ENCODE measurements at regions of chr12 and their contacts with region 1.

Region 1: DNA sequence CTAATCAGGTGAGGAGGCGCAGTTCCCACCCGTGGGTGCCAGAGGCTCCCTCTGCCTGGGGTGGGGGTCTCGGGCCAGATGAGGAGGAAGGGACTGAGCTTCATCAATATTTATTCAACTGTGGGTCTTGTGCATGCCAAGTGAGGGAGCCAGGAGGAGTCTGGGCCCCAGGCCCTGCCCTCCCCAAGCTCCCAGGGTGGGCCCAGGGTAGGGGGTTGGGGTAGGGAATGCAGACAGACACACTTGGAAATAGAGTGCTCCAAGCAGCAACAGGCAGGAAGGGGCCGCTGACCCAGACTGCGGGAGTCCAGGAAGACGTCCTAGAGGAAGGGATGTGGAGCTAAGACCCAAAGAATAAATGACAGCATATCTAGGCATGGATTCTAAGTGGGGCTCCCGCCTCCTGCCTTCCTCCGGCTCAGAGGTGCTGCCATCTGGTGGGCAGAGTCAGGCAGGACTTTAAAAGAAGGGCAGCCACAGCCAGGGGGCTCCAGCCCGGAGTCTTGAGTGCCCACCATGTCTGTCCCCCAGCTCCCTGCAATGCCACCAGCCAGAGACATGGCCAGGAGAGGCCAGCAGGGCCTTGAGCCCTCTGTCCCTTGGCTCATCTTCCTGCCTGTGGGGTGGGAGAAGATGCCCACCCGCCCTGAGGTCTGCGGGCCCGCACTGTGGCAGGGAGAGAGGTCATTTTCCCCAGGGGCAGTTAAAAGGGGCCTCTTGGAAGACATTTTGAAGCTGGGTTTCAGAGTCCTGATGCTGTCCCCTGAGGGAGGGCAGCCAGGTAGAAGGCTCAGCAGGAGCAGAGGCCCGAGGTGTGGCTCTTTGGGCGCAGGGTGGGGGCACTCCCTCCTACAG is 70.1 kb downstream of the PHETA1 start:
- DNase-seq: no peak
- ATAC-seq: peak; percentile 92
- H3K4me3 ChIP-seq: no peak overlapping the region
- H3K27ac ChIP-seq: no peak overlapping the region
- H3K4me1 ChIP-seq: peaks cover 1% of the 10 kb centered on the region; the same call in 1 of the 2 replicates
- H3K27me3 ChIP-seq: no peaks in the 10 kb centered on the region
- CTCF ChIP-seq: peak; percentile 76 to 81 (median 80)
- EP300 ChIP-seq: no peak
- POLR2A ChIP-seq: no peak
- RAD21 ChIP-seq: peak; percentile 60

Region 2: DNA sequence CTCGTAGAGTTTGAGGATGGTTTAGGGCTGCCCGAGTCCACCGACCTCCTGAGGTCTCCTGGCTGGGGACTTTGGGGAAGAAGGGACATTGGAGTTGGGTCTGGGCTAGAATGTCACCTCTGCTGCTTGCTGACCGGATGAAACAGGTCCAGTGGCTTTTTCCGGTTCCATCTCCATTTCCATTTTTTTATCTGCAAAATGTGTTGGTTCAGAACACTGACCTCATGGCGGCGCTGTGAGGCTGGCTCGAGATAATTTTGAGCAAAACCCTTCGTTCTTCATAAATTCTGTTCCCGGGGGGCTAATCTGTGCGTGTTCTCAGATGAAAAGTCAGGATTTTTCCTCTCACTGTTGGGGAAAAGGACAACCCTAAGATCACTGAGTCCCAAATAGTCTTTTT is 366.8 kb before region 1 on chr12:
- CTCF ChIA-PET with region 1: interaction called, 10 read pairs
- POLR2A ChIA-PET with region 1: no interaction called
- RAD21 ChIA-PET with region 1: no interaction called
- SMC1A ChIA-PET with region 1: no interaction called
- in situ Hi-C with region 1: no loop called
- intact Hi-C with region 1: loop called (anchors 1 kb)
- DNase-seq: no peak
- ATAC-seq: no peak
- H3K4me3 ChIP-seq: no peak overlapping the region
- H3K27ac ChIP-seq: no peak overlapping the region
- H3K4me1 ChIP-seq: no peaks in the 10 kb centered on the region
- H3K27me3 ChIP-seq: no peaks in the 10 kb centered on the region
- CTCF ChIP-seq: peak; percentile 18 to 38 (median 28); a peak in 3 of 6 replicates
- EP300 ChIP-seq: no peak
- POLR2A ChIP-seq: no peak
- RAD21 ChIP-seq: 0 out of 2 replicates have a peak, but pooled peaks have one; percentile 9

Region 3: GRCh38 chr12:110937104-110937641 is 361.6 kb before region 1 on chr12:
- CTCF ChIA-PET with region 1: interaction called, 10 read pairs
- POLR2A ChIA-PET with region 1: no interaction called
- RAD21 ChIA-PET with region 1: no interaction called
- SMC1A ChIA-PET with region 1: no interaction called
- in situ Hi-C with region 1: no loop called
- intact Hi-C with region 1: loop called (anchors 1 kb)
- DNase-seq: no peak
- ATAC-seq: peak; percentile 77
- H3K4me3 ChIP-seq: no peak overlapping the region
- H3K27ac ChIP-seq: no peak overlapping the region
- H3K4me1 ChIP-seq: peaks cover 3% of the 10 kb centered on the region; the same call in 1 of the 2 replicates
- H3K27me3 ChIP-seq: no peaks in the 10 kb centered on the region
- CTCF ChIP-seq: peak; percentile 92 to 95 (median 94)
- EP300 ChIP-seq: no peak
- POLR2A ChIP-seq: no peak
- RAD21 ChIP-seq: peak; percentile 89

Region 4: DNA sequence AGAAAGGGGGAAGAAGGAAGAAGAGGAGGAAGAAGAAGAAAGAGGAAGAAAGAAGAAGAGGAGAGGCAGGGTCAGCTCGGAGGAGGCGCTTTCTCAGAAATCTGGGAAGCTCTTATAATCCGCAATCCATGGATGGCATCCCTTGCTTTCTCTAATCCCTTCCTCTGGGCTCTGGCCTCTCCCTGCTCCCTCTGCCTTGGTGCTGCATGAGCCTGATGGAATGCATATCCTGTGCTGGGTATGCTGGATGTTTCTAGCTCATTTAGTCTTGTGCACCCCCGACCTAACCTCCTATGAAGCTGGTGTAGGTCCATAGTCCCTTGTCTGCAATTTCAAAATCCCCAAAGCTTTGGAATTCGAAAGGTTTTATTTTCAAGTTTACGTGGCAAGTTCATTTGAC is 284.3 kb before region 1 on chr12:
- CTCF ChIA-PET with region 1: no interaction called
- POLR2A ChIA-PET with region 1: no interaction called
- RAD21 ChIA-PET with region 1: no interaction called
- SMC1A ChIA-PET with region 1: no interaction called
- in situ Hi-C with region 1: no loop called
- intact Hi-C with region 1: no loop called
- DNase-seq: no peak
- ATAC-seq: no peak
- H3K4me3 ChIP-seq: no peak overlapping the region
- H3K27ac ChIP-seq: no peak overlapping the region
- H3K4me1 ChIP-seq: no peaks in the 10 kb centered on the region
- H3K27me3 ChIP-seq: peaks cover 0 to 2% of the 10 kb centered on the region in 2 experiments; a peak in 1 of 4 replicates
- CTCF ChIP-seq: no peak
- EP300 ChIP-seq: no peak
- POLR2A ChIP-seq: no peak
- RAD21 ChIP-seq: no peak

Region 5: DNA sequence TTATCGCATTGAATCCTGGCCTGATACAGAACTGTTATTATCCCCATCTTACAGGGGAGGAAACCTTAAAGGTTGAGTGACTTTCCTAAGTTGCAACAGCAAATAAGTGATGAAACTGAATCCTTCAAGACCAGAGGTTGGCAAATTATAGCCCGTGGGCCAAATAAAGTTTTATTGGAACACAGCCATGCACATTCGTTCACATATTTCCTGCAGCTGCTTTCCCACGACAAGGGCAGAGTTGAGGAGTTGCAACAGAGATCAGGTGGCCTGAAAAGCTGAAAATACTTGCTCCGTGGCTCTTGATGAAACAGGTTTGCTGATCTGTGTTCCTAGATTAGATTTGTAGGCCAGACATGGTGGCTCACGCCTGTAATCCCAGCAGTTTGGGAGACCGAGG is 56.6 kb before region 1 on chr12:
- CTCF ChIA-PET with region 1: no interaction called
- POLR2A ChIA-PET with region 1: no interaction called
- RAD21 ChIA-PET with region 1: no interaction called
- SMC1A ChIA-PET with region 1: no interaction called
- in situ Hi-C with region 1: no loop called
- intact Hi-C with region 1: no loop called
- DNase-seq: no peak
- ATAC-seq: no peak
- H3K4me3 ChIP-seq: no peak overlapping the region
- H3K27ac ChIP-seq: no peak overlapping the region
- H3K4me1 ChIP-seq: no peaks in the 10 kb centered on the region
- H3K27me3 ChIP-seq: peaks cover 0 to 2% of the 10 kb centered on the region in 2 experiments; a peak in 2 of 4 replicates
- CTCF ChIP-seq: no peak
- EP300 ChIP-seq: no peak
- POLR2A ChIP-seq: no peak
- RAD21 ChIP-seq: no peak

Region 6: DNA sequence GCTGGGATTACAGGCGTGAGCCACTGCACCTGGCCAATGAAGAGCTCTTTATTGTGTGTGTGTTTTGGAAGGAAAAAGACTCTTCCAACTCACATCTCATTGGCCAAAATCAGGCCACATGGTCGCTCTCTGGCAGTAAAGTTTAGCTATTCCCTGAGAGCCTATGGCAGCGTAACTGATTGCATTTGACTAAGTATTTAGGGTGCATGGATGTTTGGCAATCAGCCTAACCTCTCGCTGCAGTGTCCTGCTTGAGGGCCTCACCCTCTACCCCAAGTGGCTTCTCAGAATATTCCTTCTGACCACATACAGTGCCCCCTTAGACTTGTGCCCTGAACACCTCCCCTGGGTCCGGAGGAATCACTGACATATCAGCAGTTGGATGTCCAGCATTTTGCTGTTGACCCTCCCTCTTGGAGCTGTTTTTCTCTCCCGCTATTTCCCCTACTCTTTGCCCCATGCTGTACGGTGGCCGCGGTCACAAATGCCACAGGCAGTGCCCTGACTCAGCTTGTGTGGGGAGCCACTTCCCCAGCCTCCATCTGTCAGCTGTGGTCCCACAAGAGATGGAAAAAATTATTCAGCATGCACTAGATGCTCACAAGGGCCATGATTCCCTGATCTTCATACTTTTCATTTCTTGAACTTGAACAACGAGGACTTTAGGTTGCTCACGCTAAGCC is 60.6 kb after region 1 on chr12:
- CTCF ChIA-PET with region 1: no interaction called
- POLR2A ChIA-PET with region 1: no interaction called
- RAD21 ChIA-PET with region 1: no interaction called
- SMC1A ChIA-PET with region 1: no interaction called
- in situ Hi-C with region 1: no loop called
- intact Hi-C with region 1: no loop called
- DNase-seq: no peak
- ATAC-seq: no peak; the same call in 2 of the 3 replicates
- H3K4me3 ChIP-seq: no peak overlapping the region
- H3K27ac ChIP-seq: no peak overlapping the region
- H3K4me1 ChIP-seq: peaks cover 7% of the 10 kb centered on the region
- H3K27me3 ChIP-seq: no peaks in the 10 kb centered on the region; a peak in 1 of 4 replicates
- CTCF ChIP-seq: no peak
- EP300 ChIP-seq: no peak
- POLR2A ChIP-seq: no peak
- RAD21 ChIP-seq: no peak

Region 7: DNA sequence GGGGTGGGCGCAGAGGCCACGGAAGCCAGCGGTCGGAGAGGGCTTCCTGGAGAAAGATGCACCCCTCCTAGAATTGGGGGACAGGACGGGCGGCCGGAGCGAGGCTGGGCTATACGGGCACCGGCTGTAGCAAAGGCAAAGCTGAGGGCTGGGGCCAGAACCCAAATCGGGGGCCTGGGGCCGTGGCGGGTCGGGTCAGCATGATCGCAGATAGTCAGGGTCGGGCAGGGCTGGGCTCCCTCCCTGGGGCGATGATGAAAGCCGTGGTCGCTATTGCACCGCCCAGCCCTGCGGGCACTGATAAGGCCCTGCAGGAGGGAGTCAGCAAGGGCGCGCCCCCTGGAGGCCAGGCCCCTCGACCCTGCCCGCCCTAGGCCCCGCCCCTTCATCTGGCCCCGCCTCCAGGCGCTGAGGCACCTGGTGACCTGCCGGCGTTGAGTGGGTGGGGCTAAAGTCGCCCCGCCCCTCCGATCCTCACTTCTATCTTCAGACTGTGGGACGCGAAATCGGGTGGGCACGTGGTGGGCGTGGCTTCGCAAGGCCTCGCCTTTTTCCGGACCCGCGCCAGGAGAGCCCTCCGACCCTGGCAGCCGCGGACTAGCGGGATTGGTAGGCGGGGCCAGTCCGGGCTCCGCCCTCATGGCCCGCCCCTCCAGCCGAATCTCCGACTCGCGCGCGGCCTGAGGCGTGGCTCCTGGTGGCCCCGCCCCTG is 106.5 kb after region 1 on chr12:
- CTCF ChIA-PET with region 1: no interaction called
- POLR2A ChIA-PET with region 1: no interaction called
- RAD21 ChIA-PET with region 1: no interaction called
- SMC1A ChIA-PET with region 1: no interaction called
- in situ Hi-C with region 1: no loop called
- intact Hi-C with region 1: no loop called
- DNase-seq: peak; percentile 86
- ATAC-seq: peak; percentile 70
- H3K4me3 ChIP-seq: peak overlapping the region; percentile 86
- H3K27ac ChIP-seq: peak overlapping the region; percentile 91
- H3K4me1 ChIP-seq: peaks cover 49% of the 10 kb centered on the region
- H3K27me3 ChIP-seq: no peaks in the 10 kb centered on the region
- CTCF ChIP-seq: peak; percentile 60 to 70 (median 64); a peak in 5 of 6 replicates
- EP300 ChIP-seq: no peak
- POLR2A ChIP-seq: peak; percentile 85
- RAD21 ChIP-seq: no peak